Activated T-helper 1 cell treated with anti-CD3 and anti-CD28 coated beads, Interleukin-12 subunit alpha, Interleukin-12 subunit beta, Interleukin-2, Interleukin-4 antibody, amounts not matched to agents 30 ng/mL and 10 ng/mL and 1 ng/mL, durations not matched to agents 14 hours and 24 hours and 36 hours (primary cell): ENCODE measurements at regions of chr1 and their contacts with region 1.

Region 1: DNA sequence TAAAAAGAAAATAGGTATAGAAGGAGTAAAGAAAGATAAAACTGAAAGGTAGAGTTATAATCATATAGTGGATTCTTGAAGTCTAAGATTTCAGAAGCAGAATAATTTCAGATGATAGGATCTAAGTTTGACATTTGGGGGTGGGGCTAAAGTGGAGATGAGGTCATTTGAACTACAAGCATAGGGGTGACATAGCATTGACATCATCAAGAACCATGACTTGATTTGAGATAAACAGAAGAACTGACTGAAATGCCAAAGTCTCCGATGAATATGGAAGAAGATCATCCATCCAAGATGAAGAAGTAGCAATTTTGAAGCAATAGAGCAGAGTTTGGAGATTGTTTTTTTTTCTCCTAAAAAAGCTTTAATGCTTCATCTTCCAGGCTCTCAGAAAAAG is 122.3 kb downstream of the MACF1 start:
- DNase-seq: no peak
- H3K4me3 Mint-ChIP-seq: no peak overlapping the region
- H3K27ac Mint-ChIP-seq: no peak overlapping the region
- H3K4me1 Mint-ChIP-seq: peaks cover 37% of the 10 kb centered on the region
- H3K27me3 Mint-ChIP-seq: no peaks in the 10 kb centered on the region

Region 2: GRCh38 chr1:39189592-39190041 is 137.2 kb before region 1 on chr1:
- intact Hi-C with region 1: loop called (anchors 5 kb)
- DNase-seq: no peak
- H3K4me3 Mint-ChIP-seq: peak overlapping the region; percentile 37
- H3K27ac Mint-ChIP-seq: peak overlapping the region; percentile 95
- H3K4me1 Mint-ChIP-seq: peaks cover 87% of the 10 kb centered on the region
- H3K27me3 Mint-ChIP-seq: no peaks in the 10 kb centered on the region

Region 3: DNA sequence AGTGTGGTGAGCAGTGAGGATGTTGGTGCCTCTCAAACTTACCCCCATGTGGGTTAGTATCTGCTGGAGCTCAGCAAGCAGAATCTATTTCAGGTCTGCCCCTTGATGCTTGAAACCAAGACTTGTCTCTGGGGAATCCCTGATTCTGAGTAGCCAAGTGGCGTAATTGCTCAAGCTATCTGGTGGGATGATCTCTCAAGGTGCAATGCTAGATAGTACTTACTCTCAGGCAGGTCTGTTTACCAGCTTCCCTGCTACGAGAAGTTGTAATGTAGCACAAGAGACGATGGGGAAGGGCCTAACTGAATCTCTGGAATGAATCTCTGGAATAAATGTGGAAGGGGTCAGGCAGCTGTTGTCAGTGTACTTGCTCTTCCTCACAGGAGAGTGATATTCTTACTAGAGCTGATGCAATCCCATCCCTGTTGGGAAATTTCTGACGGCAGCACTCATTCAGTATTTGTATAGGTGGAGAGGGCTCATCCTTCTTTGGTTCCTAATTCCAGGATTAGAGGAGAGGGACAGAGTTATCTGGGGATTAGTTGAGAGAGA is 57.0 kb before region 1 on chr1:
- intact Hi-C with region 1: loop called (anchors 5 kb)
- DNase-seq: no peak
- H3K4me3 Mint-ChIP-seq: peak overlapping the region; percentile 43
- H3K27ac Mint-ChIP-seq: peak overlapping the region; percentile 38
- H3K4me1 Mint-ChIP-seq: peaks cover 77% of the 10 kb centered on the region
- H3K27me3 Mint-ChIP-seq: no peaks in the 10 kb centered on the region

Region 4: GRCh38 chr1:39981957-39982356 is 655.1 kb after region 1 on chr1:
- intact Hi-C with region 1: no loop called
- DNase-seq: no peak
- H3K4me3 Mint-ChIP-seq: no peak overlapping the region
- H3K27ac Mint-ChIP-seq: no peak overlapping the region
- H3K4me1 Mint-ChIP-seq: no peaks in the 10 kb centered on the region
- H3K27me3 Mint-ChIP-seq: peaks cover 4% of the 10 kb centered on the region